K562 (cell line): ENCODE measurements at regions of chr2 and their contacts with region 1.

Region 1: GRCh38 chr2:179440642-179441251 is 176.1 kb upstream of the SESTD1 start:
- DNase-seq: peak; percentile 16 to 48 (median 17)
- ATAC-seq: peak; percentile 54; the same call in 2 of the 3 replicates
- H3K4me3 ChIP-seq: no peak overlapping the region
- H3K27ac ChIP-seq: no peak overlapping the region
- H3K4me1 ChIP-seq: no peaks in the 10 kb centered on the region
- H3K27me3 ChIP-seq: no peaks in the 10 kb centered on the region
- CTCF ChIP-seq: peak; percentile 40 to 56 (median 41); a peak in 4 of 6 replicates
- EP300 ChIP-seq: no peak
- POLR2A ChIP-seq: no peak
- RAD21 ChIP-seq: peak; percentile 52 to 67; a peak in 3 of 4 replicates

Region 2: GRCh38 chr2:178796079-178796677 is 644.6 kb before region 1 on chr2:
- CTCF ChIA-PET with region 1: no interaction called
- POLR2A ChIA-PET with region 1: no interaction called
- in situ Hi-C with region 1: no loop called
- intact Hi-C with region 1: loop called (anchors 10 kb)
- DNase-seq: peak in 2 of 4 experiments; percentile 16 to 19
- ATAC-seq: no peak
- H3K4me3 ChIP-seq: no peak overlapping the region
- H3K27ac ChIP-seq: no peak overlapping the region
- H3K4me1 ChIP-seq: no peaks in the 10 kb centered on the region
- H3K27me3 ChIP-seq: peaks cover 4 to 8% of the 10 kb centered on the region in 2 experiments; a peak in 3 of 5 replicates
- CTCF ChIP-seq: peak; percentile 31 to 75 (median 42); a peak in 3 of 6 replicates
- EP300 ChIP-seq: no peak
- POLR2A ChIP-seq: no peak
- RAD21 ChIP-seq: peak; percentile 65 to 82

Region 3: DNA sequence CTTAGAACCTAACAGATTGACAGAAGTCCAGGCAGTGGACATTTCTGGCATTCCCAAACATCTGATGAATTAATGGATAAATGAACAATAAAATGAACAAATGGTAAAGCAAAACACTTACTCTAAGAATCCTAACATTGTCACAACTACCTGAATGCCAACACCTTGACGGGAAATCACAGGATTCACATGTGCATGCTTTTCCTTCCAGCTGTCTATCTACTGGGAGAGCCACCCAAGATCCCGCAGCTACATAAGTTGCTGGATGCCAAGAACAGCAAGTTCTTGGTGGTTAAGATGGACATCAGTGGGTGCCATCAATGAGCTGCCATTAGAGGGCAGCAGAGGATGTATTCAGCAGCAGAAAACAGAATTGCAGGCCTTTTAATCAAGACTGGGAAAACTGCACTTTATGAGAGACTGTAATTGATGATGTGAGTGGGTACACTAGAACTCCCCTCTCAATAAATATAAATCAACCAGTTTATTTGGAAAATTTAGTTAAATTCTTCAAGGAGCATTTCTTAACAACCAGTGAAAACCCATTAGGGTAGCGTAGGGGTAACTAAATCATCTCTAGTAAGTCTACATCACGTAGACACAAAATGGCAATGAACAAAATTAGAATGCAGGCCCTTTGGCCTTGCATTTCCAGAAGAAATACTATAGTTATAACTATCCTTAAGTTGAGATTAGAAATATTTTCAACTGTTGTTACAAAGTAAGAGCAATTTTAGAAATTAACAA is 221.7 kb before region 1 on chr2:
- CTCF ChIA-PET with region 1: no interaction called
- POLR2A ChIA-PET with region 1: no interaction called
- in situ Hi-C with region 1: no loop called
- intact Hi-C with region 1: loop called (anchors 2 kb)
- DNase-seq: peak; percentile 30 to 73 (median 39)
- ATAC-seq: peak; percentile 85
- H3K4me3 ChIP-seq: no peak overlapping the region
- H3K27ac ChIP-seq: no peak overlapping the region
- H3K4me1 ChIP-seq: no peaks in the 10 kb centered on the region
- H3K27me3 ChIP-seq: no peaks in the 10 kb centered on the region
- CTCF ChIP-seq: peak; percentile 70 to 78 (median 73)
- EP300 ChIP-seq: no peak
- POLR2A ChIP-seq: no peak
- RAD21 ChIP-seq: peak; percentile 64 to 74

Region 4: DNA sequence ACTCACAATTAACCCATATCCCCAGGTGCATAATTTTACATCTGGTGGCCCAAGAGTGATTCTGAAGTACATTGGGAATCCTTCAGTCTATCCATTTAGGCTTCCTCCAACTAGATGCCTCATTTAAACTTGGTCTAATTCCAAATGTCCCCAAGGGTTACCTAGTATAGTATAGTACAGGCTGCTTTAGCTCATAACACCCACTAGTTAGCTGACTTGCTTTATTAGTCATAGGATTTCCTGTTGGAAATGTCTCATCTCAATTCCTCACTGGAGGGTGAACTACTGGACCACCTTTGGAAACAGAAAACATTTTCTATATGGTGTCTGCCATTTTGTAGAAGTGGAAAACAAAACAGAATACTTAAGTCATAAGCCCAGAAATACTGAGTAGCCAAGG is 26.4 kb after region 1 on chr2:
- CTCF ChIA-PET with region 1: no interaction called
- POLR2A ChIA-PET with region 1: no interaction called
- in situ Hi-C with region 1: no loop called
- intact Hi-C with region 1: no loop called
- DNase-seq: no peak
- ATAC-seq: no peak
- H3K4me3 ChIP-seq: no peak overlapping the region
- H3K27ac ChIP-seq: no peak overlapping the region
- H3K4me1 ChIP-seq: no peaks in the 10 kb centered on the region
- H3K27me3 ChIP-seq: no peaks in the 10 kb centered on the region
- CTCF ChIP-seq: no peak
- EP300 ChIP-seq: no peak
- POLR2A ChIP-seq: no peak
- RAD21 ChIP-seq: no peak